Head of caudate nucleus (tissue), 42 donors: ENCODE measurements at regions of chr16 and their contacts with region 1.

Region 1: DNA sequence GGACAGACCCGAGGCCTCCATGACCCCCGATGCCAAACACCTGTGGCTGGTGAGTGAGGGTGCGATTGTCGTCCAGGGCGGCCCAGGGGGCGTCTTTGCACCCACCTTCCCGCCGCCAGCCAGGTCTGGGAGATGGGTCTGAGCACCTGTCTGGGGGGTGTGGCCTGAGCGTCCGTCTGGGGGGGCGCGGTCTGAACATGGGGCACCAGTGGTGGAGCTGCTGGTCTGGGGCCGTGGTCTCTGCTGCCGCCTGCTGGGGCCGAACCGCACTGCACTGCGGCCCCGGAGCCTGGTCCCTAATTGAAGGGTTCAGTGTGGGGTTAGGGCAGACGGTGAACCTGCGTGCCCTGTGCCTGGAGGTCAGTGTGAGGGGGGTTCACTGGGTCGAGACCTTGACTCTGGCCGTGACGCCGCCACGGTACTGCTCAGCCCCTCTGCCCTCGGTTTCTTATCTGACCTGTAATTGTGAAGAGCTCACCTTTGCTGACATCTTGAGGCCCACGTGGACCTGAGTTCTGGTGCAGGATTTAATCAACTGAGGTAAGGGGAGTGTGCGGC is 12.6 kb upstream of the TCF25 start:
- DNase-seq: peak in 41 of 42 donors; percentile 23 to 83 (median 59)

Region 2: DNA sequence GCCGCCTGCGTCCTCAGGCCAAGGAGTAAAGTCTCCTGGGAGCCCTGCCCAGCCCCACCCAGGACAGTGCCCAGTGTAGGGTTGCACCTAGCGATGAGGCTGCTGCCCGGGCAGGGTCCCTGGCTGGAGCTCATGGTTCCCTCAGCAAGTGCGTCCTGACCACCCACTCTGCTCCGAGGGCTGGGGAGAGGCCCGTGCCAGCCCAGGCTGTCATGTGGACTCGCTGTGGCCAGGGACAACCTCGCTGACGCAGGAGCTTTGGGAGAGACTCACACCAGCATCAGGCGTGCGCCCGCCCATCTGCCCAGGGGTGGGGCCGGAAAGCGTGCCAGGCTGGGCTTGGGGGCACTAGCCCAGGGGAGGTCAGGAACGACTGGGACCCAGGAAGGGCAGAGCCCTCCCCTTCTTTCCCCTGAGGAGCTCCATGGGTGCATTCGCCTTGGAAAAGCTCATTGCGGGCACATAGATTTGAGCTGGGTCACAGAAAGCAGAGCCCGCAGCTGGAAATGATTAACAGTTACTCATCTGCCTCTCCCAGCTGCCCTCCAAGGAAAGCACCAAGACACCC is 227.7 kb before region 1 on chr16:
- intact Hi-C with region 1: no loop called
- DNase-seq: no peak

Region 3: DNA sequence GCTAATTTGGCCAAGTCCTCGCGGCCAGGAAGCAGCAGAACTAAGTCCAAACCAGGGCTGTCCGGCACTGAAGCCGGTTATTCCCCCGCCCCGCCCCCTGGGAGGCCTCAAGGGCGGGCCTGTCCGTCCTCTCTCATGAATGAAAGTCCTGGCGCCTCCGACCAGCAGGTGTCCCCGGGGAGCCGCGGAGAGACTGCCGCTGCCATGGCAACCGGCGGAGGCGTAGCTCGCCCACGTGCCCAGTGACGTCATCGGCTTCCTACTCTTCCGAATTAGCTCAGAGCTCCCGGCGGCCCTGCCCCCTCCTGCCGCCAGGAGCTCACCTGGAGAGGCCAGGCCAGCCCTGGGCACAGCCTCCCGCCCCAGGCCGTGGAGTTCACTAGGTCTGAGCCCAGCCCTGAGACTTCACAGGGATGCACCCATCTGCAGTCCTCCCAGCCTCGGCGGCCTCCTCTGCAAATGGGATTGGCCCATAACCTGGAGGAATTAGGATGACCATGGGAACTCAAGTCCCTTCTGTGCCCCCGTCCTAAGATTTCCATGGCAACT is 160.7 kb before region 1 on chr16:
- intact Hi-C with region 1: loop called (anchors 10 kb)
- DNase-seq: peak; percentile 99 to 100 (median 100)